Naive thymus-derived CD8-positive, alpha-beta T cell (primary cell): ENCODE measurements at regions of chr17 and their contacts with region 1.

Region 1: GRCh38 chr17:35764123-35764991 is 3.7 kb downstream of the C17orf50 start:
- DNase-seq: peak; percentile 78 to 90 (median 85)
- ATAC-seq: peak; percentile 90
- H3K4me3 Mint-ChIP-seq: peak overlapping the region; percentile 86 to 98 (median 96)
- H3K27ac Mint-ChIP-seq: peak overlapping the region; percentile 58 to 93 (median 88)
- H3K4me1 Mint-ChIP-seq: peaks cover 7 to 9% (median 7%) of the 10 kb centered on the region in 4 donors
- H3K27me3 Mint-ChIP-seq: no peaks in the 10 kb centered on the region

Region 2: DNA sequence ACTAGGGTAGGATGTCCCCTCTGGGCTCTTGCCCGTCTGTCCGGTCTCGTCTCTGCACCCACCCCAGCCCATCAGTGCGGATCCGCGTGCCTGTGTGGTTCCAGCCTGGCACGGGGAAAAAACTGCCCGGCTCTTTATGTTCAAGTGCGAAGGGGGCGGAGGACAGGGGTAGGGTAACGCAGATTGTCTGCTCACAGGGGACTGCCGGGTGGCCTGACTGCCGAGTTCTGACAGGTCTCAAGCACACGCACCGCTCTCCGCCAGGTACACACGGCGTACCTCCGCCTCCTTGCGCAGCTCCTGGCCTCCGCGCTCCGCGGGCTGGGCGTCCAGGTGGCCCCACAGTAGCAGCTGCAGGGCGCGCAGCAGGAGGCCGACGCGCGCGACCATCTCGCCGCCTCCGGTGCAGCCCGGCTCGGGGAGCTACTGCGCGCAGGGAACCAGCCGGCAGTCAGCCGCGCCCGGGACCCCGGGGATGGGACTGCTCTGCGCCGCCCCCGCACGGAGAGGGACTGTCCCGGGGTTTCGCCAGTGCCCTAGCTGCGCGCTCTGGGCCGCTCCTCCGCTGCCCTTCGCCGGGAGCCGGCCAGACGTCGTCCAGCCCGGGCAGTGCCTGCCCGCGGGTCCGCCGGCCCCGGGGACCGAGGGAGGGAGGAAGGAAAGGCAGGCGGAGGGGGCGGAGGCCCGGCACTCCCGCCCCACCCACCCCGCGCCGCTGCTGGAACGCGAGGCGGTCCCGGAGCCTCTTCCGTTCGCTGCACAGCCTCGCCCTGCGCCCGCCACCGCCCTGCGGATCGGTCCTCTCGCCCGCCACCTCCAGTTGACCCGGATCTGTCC is 30.8 kb after region 1 on chr17 and contains the start of gene MMP28:
- POLR2A ChIA-PET with region 1: interaction called, 41 read pairs
- DNase-seq: peak in 7 of 10 donors; percentile 31 to 57 (median 48)
- ATAC-seq: peak; percentile 78 to 85
- H3K4me3 Mint-ChIP-seq: peak within 1 kb of the TSS; percentile 79 to 92 (median 84)
- H3K27ac Mint-ChIP-seq: peak within 1 kb of the TSS in 6 of 10 donors; percentile 7 to 70 (median 25)
- H3K4me1 Mint-ChIP-seq: peaks cover 18 to 56% (median 38%) of the 10 kb centered on the region in 4 donors
- H3K27me3 Mint-ChIP-seq: peaks cover 0 to 32% (median 8%) of the 10 kb centered on the region in 5 donors
- polyA plus RNA-seq, gene MMP28: 10.0 to 30.1 (median 13.4) TPM

Region 3: GRCh38 chr17:35801583-35802224 is 37.3 kb after region 1 on chr17:
- POLR2A ChIA-PET with region 1: interaction called, 41 read pairs
- DNase-seq: peak in 4 of 10 donors; percentile 7 to 33 (median 24)
- ATAC-seq: peak; percentile 43 to 51
- H3K4me3 Mint-ChIP-seq: peak overlapping the region; percentile 55 to 78 (median 68)
- H3K27ac Mint-ChIP-seq: peak overlapping the region; percentile 41 to 95 (median 90)
- H3K4me1 Mint-ChIP-seq: peaks cover 19 to 46% (median 39%) of the 10 kb centered on the region in 4 donors
- H3K27me3 Mint-ChIP-seq: peaks cover 0 to 6% (median 0%) of the 10 kb centered on the region in 5 donors

Region 4: DNA sequence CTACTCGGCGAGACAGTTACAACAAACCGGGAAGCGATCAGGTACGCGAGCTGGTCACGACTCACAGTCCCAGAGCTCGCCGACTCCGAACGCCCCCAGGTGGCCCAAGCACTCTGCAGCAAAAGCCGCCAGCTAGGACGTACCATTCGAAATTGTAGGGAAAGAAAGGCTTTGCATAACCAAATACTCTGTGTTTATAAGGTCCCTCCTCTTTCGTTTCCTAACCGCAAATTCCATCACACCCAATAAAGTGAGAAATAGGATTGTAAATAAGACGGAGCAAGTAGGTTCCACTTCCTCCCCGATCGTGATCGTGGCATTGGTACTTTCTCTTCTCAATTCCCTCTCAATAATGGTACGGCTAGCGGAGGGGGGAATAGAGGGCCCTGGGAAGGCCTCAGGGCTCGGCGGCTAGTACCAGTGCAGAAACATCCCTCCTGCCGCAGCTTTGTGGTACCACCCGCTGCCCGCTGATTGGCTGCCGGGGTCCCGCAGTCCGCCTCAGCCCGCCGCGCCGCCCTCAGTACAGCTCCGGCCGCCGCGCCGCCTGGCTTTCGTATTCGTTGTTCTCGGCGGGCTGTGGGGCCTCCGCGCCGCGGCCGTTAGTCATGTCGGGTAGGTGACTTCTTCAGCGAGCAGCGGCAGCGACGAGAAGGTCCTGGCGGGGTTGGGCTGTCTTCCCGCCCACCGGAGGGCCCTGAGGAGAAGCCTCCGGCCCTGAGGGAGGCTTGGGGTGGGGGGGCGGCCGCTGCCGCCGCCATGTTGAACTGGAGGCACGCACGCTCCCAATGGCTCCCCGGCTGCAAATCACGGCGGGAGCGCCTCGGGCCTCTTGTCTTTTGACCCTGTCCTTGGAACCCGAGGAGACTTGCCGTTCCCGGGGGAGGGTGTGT is 44.9 kb after region 1 on chr17 and contains the start of gene TAF15:
- POLR2A ChIA-PET with region 1: interaction called, 165 read pairs
- DNase-seq: peak; percentile 92 to 98 (median 96)
- ATAC-seq: peak; percentile 90 to 92
- H3K4me3 Mint-ChIP-seq: peak within 1 kb of the TSS; percentile 92 to 99 (median 96)
- H3K27ac Mint-ChIP-seq: peak within 1 kb of the TSS; percentile 92 to 100 (median 98)
- H3K4me1 Mint-ChIP-seq: peaks cover 35 to 73% (median 62%) of the 10 kb centered on the region in 4 donors
- H3K27me3 Mint-ChIP-seq: no peaks in the 10 kb centered on the region
- polyA plus RNA-seq, gene TAF15: 15.0 to 20.2 (median 19.9) TPM